Posterior vena cava (tissue), 2 donors: ENCODE measurements at regions of chr4 and their contacts with region 1.

Region 1: GRCh38 chr4:2327579-2327978 is 65.7 kb upstream of the MXD4 start:
- DNase-seq: no peak

Region 2: GRCh38 chr4:2255501-2256155 is 72.0 kb before region 1 on chr4:
- intact Hi-C with region 1: no loop called
- DNase-seq: peak; percentile 77

Region 3: DNA sequence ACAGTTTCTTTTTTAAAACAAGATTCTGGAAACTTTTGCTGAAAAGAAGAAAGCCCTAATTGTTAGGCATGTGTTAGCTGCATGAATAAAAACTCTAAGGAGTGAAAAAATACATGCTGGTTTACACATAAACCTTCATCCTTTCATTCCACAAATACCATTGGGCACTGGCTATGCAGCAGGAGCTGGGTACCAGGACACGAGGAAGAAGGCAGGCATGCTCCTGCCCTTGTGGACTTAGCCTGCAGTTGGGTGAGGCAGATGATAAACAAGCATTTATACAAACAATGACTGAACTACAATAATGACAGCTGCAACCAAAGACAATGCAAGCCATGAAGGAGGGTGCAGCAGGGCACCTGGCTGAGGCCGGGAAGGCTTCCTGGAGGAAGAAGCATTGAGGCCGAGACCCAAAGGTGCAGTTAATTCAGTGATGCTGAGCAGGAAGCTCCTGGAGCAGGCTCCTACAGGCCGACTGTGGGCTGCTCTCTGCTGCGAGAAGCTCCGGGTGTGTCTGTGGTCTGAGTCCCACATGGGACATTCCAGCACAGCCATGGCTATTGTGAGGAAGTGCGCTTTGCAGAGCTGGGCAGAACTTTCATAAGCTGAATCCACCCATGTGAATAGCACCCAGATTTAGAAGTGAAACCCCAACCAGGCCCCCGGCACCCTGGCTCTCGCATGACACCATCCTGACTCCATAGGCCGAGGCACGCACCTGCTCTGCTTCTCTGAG is 21.6 kb before region 1 on chr4:
- intact Hi-C with region 1: loop called in 1 of 2 experiments (anchors 1 kb)
- DNase-seq: peak; percentile 71

Region 4: GRCh38 chr4:2352171-2352570 is 24.6 kb after region 1 on chr4:
- intact Hi-C with region 1: no loop called
- DNase-seq: no peak